Panc1 (cell line): ENCODE measurements at regions of chr2 and their contacts with region 1.

Region 1: DNA sequence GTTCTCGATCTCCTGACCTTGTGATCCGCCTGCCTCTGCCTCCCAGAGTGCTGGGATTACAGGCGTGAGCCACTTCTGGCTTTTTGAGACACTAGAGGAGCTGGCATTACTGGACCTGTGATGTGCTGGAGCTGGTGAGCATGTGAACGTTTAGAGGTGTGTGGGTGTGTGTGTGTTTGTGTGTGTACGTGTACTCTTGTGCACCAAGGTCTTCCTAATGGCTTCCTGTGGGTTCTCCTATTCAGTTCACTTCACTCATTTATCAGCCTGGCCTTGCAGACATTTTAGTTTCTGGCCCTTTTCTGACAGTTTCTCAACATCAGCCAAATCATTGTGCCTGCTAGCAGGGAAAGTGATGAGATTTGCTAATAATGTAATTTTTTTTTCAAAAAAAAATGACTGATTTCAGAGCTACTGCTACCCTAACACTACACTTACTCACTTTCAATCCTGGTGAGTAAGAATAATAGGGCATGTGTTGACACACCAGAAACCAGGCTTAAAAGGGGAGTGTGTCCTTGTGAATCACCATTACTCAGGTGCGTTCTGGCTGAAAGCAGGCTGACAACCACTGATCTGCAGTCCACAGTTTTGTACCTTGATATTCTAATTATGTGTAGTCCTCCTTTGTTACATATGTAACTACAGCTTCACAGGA is 41.0 kb upstream of the ACTR3 start:
- DNase-seq: peak; percentile 53
- ATAC-seq: 0 out of 2 replicates have a peak, but pooled peaks have one; percentile 65
- H3K4me3 ChIP-seq: no peak overlapping the region
- H3K27ac ChIP-seq: no peak overlapping the region
- H3K4me1 ChIP-seq: no peaks in the 10 kb centered on the region
- H3K27me3 ChIP-seq: no peaks in the 10 kb centered on the region
- CTCF ChIP-seq: no peak

Region 2: GRCh38 chr2:113806217-113806930 is 42.5 kb before region 1 on chr2:
- CTCF ChIA-PET with region 1: no interaction called
- POLR2A ChIA-PET with region 1: interaction called, 12 read pairs
- in situ Hi-C with region 1: no loop called
- intact Hi-C with region 1: no loop called
- DNase-seq: no peak
- ATAC-seq: peak; percentile 76
- H3K4me3 ChIP-seq: no peak overlapping the region
- H3K27ac ChIP-seq: peak overlapping the region; percentile 74
- H3K4me1 ChIP-seq: 0 out of 2 replicates have a peak, but pooled peaks cover 2% of the 10 kb centered on the region
- H3K27me3 ChIP-seq: no peaks in the 10 kb centered on the region; the same call in 1 of the 2 replicates
- CTCF ChIP-seq: no peak

Region 3: DNA sequence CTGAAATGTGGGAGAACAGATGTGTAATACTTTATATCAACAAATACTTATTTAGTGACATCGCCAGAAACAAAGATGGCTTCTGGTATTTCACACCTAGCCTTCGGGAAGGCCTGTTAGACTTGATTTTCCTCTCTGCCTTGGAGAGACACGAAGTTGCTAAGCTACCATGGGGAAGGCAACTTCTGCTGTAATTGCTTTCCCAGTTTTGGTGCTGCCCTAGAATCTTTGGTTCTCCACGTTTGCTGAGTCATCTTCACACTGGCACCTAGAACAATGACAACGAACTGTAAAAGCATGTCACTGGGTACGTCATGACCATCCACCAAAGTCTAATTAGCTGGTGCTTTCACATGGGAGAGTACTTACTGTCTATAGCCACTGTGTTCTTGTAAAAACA is 17.7 kb before region 1 on chr2:
- CTCF ChIA-PET with region 1: no interaction called
- POLR2A ChIA-PET with region 1: interaction called, 16 read pairs
- in situ Hi-C with region 1: no loop called
- intact Hi-C with region 1: no loop called
- DNase-seq: no peak
- ATAC-seq: no peak
- H3K4me3 ChIP-seq: no peak overlapping the region
- H3K27ac ChIP-seq: no peak overlapping the region; the same call in 1 of the 2 replicates
- H3K4me1 ChIP-seq: 0 out of 2 replicates have a peak, but pooled peaks cover 2% of the 10 kb centered on the region
- H3K27me3 ChIP-seq: no peaks in the 10 kb centered on the region
- CTCF ChIP-seq: no peak

Region 4: DNA sequence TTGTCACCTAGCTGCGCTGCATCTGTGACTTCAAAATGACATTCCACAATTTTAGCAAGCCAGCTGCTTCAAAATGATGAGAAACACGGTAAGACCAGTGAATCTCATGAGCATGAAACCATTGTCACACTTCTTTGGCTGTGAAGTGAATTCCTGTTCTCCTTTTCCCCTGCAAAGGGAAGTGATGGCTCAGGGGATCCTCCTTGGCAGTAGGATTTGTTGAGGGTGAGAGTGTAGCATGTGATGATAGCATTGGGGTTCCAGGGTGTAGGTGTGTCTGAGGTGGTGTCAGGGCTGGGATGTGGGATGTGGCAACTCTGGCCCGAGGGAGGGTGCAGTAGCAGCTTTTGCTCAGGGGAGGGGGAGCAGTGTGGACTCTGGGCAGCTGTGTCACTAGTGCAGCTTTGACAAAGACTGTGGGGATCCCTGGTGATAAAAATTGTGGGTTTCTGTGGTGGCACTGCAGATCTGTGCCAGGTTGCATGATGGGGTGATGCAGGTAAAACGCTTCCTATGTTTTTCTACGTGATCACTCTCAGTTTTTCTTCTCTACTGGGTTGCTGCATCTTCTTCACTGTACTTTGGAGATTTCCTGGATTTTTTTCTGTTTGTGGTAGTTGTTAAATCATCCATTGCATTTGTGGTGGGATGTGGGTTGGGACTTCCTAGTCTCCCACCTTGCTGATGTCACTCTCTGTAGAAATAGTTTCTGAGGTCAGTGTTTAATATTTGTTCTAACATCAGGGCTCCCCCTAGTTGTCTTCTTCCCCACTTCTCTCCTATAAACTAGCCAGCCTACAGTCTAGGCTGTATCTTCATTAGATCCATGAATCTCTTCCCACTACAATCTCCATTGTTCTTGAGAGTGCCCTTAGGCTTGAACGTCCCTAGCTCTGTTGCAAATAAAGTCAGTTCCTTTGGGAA is 148.0 kb after region 1 on chr2:
- CTCF ChIA-PET with region 1: no interaction called
- POLR2A ChIA-PET with region 1: interaction called, 10 read pairs
- in situ Hi-C with region 1: no loop called
- intact Hi-C with region 1: no loop called
- DNase-seq: no peak
- ATAC-seq: no peak
- H3K4me3 ChIP-seq: no peak overlapping the region
- H3K27ac ChIP-seq: no peak overlapping the region
- H3K4me1 ChIP-seq: no peaks in the 10 kb centered on the region
- H3K27me3 ChIP-seq: no peaks in the 10 kb centered on the region
- CTCF ChIP-seq: 0 out of 2 replicates have a peak, but pooled peaks have one; percentile 8